ENCODE measurements at regions of chr2 and their contacts with region 1.

Region 1: GRCh38 chr2:167127135-167127534 is 238.9 kb downstream of the XIRP2 start:
- DNase-seq: peak; percentile 42
- H3K4me3 ChIP-seq: no peak overlapping the region
- H3K27ac ChIP-seq: no peak overlapping the region
- H3K4me1 ChIP-seq: no peaks in the 10 kb centered on the region
- H3K27me3 ChIP-seq: no peaks in the 10 kb centered on the region
- CTCF ChIP-seq: peak in 1 of 2 donors; percentile 10
- POLR2A ChIP-seq: no peak

Region 2: GRCh38 chr2:167157523-167157922 is 30.4 kb after region 1 on chr2:
- CTCF ChIA-PET with region 1: no interaction called
- POLR2A ChIA-PET with region 1: no interaction called
- dilution Hi-C with region 1: no loop called
- intact Hi-C with region 1: no loop called
- DNase-seq: no peak
- H3K4me3 ChIP-seq: no peak overlapping the region
- H3K27ac ChIP-seq: no peak overlapping the region
- H3K4me1 ChIP-seq: no peaks in the 10 kb centered on the region
- H3K27me3 ChIP-seq: no peaks in the 10 kb centered on the region
- CTCF ChIP-seq: no peak
- POLR2A ChIP-seq: no peak

Region 3: GRCh38 chr2:167212014-167212648 is 85.0 kb after region 1 on chr2:
- CTCF ChIA-PET with region 1: interaction called, 8 read pairs
- POLR2A ChIA-PET with region 1: no interaction called
- dilution Hi-C with region 1: no loop called
- intact Hi-C with region 1: loop called (anchors 1 kb)
- DNase-seq: peak; percentile 55
- H3K4me3 ChIP-seq: no peak overlapping the region
- H3K27ac ChIP-seq: no peak overlapping the region
- H3K4me1 ChIP-seq: no peaks in the 10 kb centered on the region
- H3K27me3 ChIP-seq: no peaks in the 10 kb centered on the region
- CTCF ChIP-seq: peak; percentile 17 to 55
- POLR2A ChIP-seq: no peak

Measured in endothelial cell of umbilical vein (primary cell).